H1 (cell line): ENCODE measurements at regions of chr14 and their contacts with region 1.

Region 1: DNA sequence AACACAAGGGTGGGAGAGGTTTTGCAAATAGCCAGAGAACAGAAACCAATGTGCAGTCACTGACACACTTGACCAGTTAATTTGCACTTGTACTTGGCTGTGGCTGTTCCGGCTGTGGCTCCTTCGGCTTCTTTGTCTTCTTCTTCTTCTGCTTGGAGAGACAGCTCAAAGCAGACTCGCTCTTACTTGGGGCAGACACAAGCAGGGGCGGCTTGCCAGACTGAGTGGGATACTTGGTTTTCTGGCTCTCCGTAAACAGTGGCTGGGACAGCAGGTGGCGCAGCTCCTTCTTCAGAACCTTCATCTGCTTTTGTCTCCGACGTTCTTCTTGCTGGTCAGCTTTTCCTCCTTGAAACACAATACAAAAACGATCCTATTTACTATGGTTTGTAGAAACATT is 25.0 kb downstream of the OTUB2 start:
- DNase-seq: no peak
- H3K4me3 ChIP-seq: no peak overlapping the region
- H3K27ac ChIP-seq: no peak overlapping the region
- H3K4me1 ChIP-seq: no peaks in the 10 kb centered on the region; a peak in 1 of 7 replicates
- H3K27me3 ChIP-seq: no peaks in the 10 kb centered on the region
- CTCF ChIP-seq: peak; percentile 38 to 52 (median 47)
- EP300 ChIP-seq: no peak
- POLR2A ChIP-seq: no peak
- RAD21 ChIP-seq: peak; percentile 41 to 44; a peak in 3 of 4 replicates

Region 2: DNA sequence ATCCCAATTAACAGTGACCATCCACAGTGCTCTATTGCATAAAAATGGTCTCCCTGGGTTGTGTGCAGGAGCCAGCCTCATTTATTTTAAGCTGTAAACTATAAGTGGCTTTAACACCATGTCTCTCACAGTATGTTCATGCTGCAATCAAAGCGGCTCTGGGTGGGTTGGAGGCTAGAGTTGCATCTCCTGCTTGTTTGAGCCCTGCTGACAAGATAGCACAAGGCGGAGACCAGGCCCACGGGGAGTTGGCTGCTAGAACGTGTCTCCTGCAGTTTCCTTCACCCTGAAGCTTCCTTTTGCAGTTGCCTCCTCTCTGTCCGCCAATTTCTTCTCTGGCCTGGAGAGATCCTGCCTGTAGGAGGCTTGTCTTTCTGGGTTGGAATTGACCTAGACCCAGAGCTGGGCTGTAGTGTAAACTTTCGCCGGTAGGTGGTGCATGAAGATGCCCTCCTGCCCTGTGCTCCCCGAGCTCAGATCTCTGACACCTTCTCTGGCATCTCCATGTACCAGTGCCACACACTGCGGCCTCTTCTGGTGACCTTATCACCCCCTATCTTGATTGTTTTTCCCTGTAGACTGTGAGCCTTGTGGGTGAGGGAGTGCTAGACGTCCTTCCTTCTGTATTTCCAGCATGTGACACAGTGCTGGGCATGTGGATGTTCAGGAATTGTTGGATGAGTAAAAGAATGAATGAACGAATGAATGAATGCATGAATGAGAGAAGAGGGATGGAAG is 14.6 kb before region 1 on chr14:
- CTCF ChIA-PET with region 1: interaction called, 105 read pairs
- POLR2A ChIA-PET with region 1: interaction called, 6 read pairs
- DNase-seq: peak; percentile 60 to 91
- H3K4me3 ChIP-seq: no peak overlapping the region
- H3K27ac ChIP-seq: no peak overlapping the region
- H3K4me1 ChIP-seq: peaks cover 0 to 9% (median 0%) of the 10 kb centered on the region in 4 experiments; a peak in 2 of 7 replicates
- H3K27me3 ChIP-seq: no peaks in the 10 kb centered on the region
- CTCF ChIP-seq: peak; percentile 81 to 97 (median 97)
- EP300 ChIP-seq: no peak
- POLR2A ChIP-seq: no peak
- RAD21 ChIP-seq: peak; percentile 64 to 72

Region 3: GRCh38 chr14:94066089-94066676 is 15.1 kb after region 1 on chr14:
- CTCF ChIA-PET with region 1: interaction called, 33 read pairs
- POLR2A ChIA-PET with region 1: interaction called, 4 read pairs
- DNase-seq: no peak
- H3K4me3 ChIP-seq: no peak overlapping the region
- H3K27ac ChIP-seq: no peak overlapping the region; the same call in 1 of the 2 replicates
- H3K4me1 ChIP-seq: peaks cover 0 to 7% (median 3%) of the 10 kb centered on the region in 4 experiments; a peak in 3 of 7 replicates
- H3K27me3 ChIP-seq: no peaks in the 10 kb centered on the region
- CTCF ChIP-seq: peak in 1 of 3 experiments; percentile 24; a peak in 1 of 4 replicates
- EP300 ChIP-seq: no peak
- POLR2A ChIP-seq: no peak
- RAD21 ChIP-seq: no peak

Region 4: GRCh38 chr14:94080471-94081289 is 29.6 kb after region 1 on chr14 and contains the start of gene DDX24:
- CTCF ChIA-PET with region 1: interaction called, 12 read pairs
- POLR2A ChIA-PET with region 1: no interaction called
- DNase-seq: peak; percentile 84 to 96
- H3K4me3 ChIP-seq: peak within 1 kb of the TSS; percentile 86 to 93 (median 89)
- H3K27ac ChIP-seq: peak within 1 kb of the TSS; percentile 19; the same call in 1 of the 2 replicates
- H3K4me1 ChIP-seq: peaks cover 0 to 12% (median 0%) of the 10 kb centered on the region in 4 experiments; a peak in 1 of 7 replicates
- H3K27me3 ChIP-seq: no peaks in the 10 kb centered on the region
- CTCF ChIP-seq: no peak
- EP300 ChIP-seq: no peak
- POLR2A ChIP-seq: peak in 1 of 2 experiments; percentile 76; a peak in 2 of 3 replicates
- RAD21 ChIP-seq: no peak
- total RNA-seq, gene DDX24: 186 and 201 TPM in 2 replicates

Region 5: DNA sequence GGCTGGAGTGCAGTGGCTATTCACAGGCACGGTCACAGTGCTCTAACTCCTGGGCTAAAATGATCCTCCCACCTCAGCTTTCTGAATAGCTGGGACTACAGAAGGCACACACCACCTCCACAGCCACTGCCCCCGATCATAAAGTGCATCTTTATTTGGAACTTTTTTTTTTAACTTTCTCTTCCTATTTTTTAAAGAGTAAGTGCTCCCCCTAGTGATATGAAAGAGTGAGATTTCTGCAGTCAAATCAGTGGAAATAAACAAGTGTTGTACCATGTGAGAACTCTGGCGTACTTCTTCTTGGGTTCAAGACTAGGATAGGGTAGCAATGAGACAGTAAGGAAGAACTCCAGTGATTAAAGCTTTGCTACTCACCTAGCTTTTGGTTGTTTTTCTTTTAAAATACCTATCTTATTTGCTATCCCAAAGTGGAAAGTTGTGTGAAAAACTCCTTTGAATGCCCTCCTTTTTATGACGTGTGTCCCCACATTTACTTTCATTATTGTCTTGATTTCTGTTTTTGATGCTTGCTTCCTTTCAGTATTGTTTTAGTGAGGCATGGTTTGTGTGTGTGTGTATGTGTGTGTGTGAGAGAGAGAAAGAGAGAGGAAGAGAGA is 129.6 kb after region 1 on chr14:
- CTCF ChIA-PET with region 1: interaction called, 12 read pairs
- POLR2A ChIA-PET with region 1: no interaction called
- DNase-seq: no peak
- H3K4me3 ChIP-seq: no peak overlapping the region
- H3K27ac ChIP-seq: no peak overlapping the region
- H3K4me1 ChIP-seq: peaks cover 0 to 6% (median 3%) of the 10 kb centered on the region in 4 experiments; a peak in 5 of 7 replicates
- H3K27me3 ChIP-seq: peaks cover 0 to 2% (median 0%) of the 10 kb centered on the region in 4 experiments; a peak in 1 of 7 replicates
- CTCF ChIP-seq: peak in 2 of 3 experiments; percentile 35; a peak in 2 of 4 replicates
- EP300 ChIP-seq: no peak
- POLR2A ChIP-seq: no peak
- RAD21 ChIP-seq: peak; percentile 55 to 59

Region 6: DNA sequence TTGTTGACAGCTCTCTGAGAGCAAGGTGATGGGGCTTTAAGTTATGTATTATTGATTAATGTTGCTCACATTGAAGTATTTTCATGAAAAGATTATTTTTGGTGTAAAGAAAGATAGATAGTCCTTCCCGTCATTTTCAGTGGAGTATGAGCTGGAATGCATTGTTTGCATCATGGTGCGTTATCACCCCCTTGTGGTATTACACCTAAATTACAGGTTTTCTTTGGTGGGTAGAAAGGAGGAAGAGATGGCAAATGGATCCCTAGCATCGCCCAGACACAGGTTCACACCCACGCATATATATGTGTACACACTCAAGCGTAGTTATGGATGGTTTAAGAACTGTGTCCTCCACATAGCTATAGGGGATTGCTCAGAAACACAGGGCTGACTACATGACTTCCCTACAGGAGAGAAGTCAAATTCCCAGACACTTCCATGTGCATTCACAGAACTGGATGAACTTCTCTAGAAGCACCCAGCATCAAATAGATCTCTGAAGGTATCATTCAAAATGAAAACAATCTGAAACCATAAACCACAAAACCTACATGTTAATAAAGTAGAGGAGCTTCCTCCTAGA is 256.4 kb after region 1 on chr14:
- CTCF ChIA-PET with region 1: interaction called, 27 read pairs
- POLR2A ChIA-PET with region 1: no interaction called
- DNase-seq: peak in 1 of 2 experiments; percentile 44
- H3K4me3 ChIP-seq: no peak overlapping the region
- H3K27ac ChIP-seq: no peak overlapping the region
- H3K4me1 ChIP-seq: no peaks in the 10 kb centered on the region
- H3K27me3 ChIP-seq: no peaks in the 10 kb centered on the region
- CTCF ChIP-seq: peak in 2 of 3 experiments; percentile 60 to 76; a peak in 3 of 4 replicates
- EP300 ChIP-seq: no peak
- POLR2A ChIP-seq: no peak
- RAD21 ChIP-seq: peak; percentile 83 to 84